ENCODE measurements at regions of chr4 and their contacts with region 1.

Region 1: DNA sequence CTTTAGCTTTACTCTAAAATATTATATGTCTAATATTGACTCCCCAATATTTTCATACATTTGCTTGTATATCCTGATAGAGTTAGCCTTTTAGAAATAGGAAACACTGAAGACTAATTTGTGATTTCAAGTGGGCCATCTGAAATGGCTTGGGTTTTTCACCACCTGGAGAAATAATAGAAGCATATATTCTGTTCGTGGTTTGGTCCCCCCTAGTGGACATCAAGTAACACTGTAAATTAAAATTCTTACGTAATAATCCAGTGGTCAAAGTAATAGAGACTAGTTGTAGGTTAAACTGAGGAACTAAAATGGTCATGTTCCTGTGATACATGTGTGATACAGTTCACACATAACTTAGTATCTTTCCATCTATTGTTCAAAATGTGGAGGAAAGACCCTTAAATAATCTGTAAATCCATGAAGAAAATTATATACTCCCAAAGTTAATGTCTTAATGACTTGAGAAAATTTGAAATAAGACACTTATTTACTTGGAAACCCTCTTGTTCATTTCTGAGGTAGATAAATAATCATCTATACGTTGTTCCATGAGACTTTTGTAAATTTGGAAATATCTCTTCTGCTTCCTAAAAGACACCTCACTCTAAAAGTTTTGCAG is 79.8 kb upstream of the SMARCAD1 start:
- DNase-seq: no peak
- H3K4me3 ChIP-seq: no peak overlapping the region
- H3K27ac ChIP-seq: no peak overlapping the region
- H3K4me1 ChIP-seq: no peaks in the 10 kb centered on the region
- H3K27me3 ChIP-seq: no peaks in the 10 kb centered on the region
- CTCF ChIP-seq: peak in 3 of 4 experiments; percentile 50 to 54 (median 50)
- POLR2A ChIP-seq: no peak

Region 2: GRCh38 chr4:93791570-93792195 is 336.1 kb before region 1 on chr4:
- intact Hi-C with region 1: loop called (anchors 5 kb)
- DNase-seq: peak; percentile 32
- H3K4me3 ChIP-seq: no peak overlapping the region
- H3K27ac ChIP-seq: no peak overlapping the region
- H3K4me1 ChIP-seq: no peaks in the 10 kb centered on the region
- H3K27me3 ChIP-seq: no peaks in the 10 kb centered on the region
- CTCF ChIP-seq: peak in 3 of 4 experiments; percentile 59 to 70 (median 67)
- POLR2A ChIP-seq: no peak

Region 3: DNA sequence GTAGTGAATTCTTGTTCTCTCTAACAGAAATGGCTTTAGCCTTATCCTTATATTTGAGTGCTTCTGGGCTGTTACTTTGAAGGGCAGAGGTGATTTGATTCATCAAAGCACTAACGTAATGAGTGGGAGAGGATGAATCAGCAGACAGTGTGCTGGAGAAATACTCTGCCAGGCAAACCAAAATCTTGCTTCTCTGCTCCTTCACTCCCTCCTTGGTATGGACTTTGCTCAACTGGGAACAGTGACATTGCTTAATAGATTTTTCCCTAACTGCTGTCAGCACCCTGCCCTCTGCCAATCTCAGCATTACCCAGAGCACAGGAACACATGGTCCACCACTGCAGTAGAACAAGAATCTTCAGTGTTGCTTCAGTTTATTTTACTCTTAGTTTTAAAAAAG is 379.9 kb after region 1 on chr4:
- intact Hi-C with region 1: no loop called
- DNase-seq: no peak
- H3K4me3 ChIP-seq: no peak overlapping the region
- H3K27ac ChIP-seq: no peak overlapping the region
- H3K4me1 ChIP-seq: no peaks in the 10 kb centered on the region
- H3K27me3 ChIP-seq: no peaks in the 10 kb centered on the region
- CTCF ChIP-seq: no peak
- POLR2A ChIP-seq: no peak